Natural killer cell (primary cell): ENCODE measurements at regions of chr11 and their contacts with region 1.

Region 1: GRCh38 chr11:3037040-3037944 is 19.9 kb downstream of the CARS1 start:
- DNase-seq: peak; percentile 53 to 69
- ATAC-seq: peak; percentile 59 to 85 (median 74)
- H3K4me3 ChIP-seq: no peak overlapping the region
- H3K4me3 Mint-ChIP-seq: peak overlapping the region; percentile 14
- H3K27ac ChIP-seq: peak overlapping the region; percentile 0
- H3K27ac Mint-ChIP-seq: peak overlapping the region; percentile 53 to 77
- H3K4me1 ChIP-seq: peaks cover 31% of the 10 kb centered on the region
- H3K4me1 Mint-ChIP-seq: peaks cover 26 to 32% of the 10 kb centered on the region in 2 donors
- H3K27me3 ChIP-seq: no peaks in the 10 kb centered on the region
- H3K27me3 Mint-ChIP-seq: no peaks in the 10 kb centered on the region
- CTCF ChIP-seq: peak; percentile 63

Region 2: GRCh38 chr11:3091791-3092602 is 54.7 kb after region 1 on chr11:
- intact Hi-C with region 1: loop called (anchors 2 kb)
- DNase-seq: peak; percentile 66 to 86
- ATAC-seq: peak; percentile 80 to 89 (median 80)
- H3K4me3 ChIP-seq: no peak overlapping the region
- H3K4me3 Mint-ChIP-seq: no peak overlapping the region
- H3K27ac ChIP-seq: no peak overlapping the region
- H3K27ac Mint-ChIP-seq: peak overlapping the region in 1 of 2 donors; percentile 22
- H3K4me1 ChIP-seq: peaks cover 10% of the 10 kb centered on the region
- H3K4me1 Mint-ChIP-seq: peaks cover 0 to 23% of the 10 kb centered on the region in 2 donors
- H3K27me3 ChIP-seq: no peaks in the 10 kb centered on the region
- H3K27me3 Mint-ChIP-seq: no peaks in the 10 kb centered on the region
- CTCF ChIP-seq: peak; percentile 98

Region 3: DNA sequence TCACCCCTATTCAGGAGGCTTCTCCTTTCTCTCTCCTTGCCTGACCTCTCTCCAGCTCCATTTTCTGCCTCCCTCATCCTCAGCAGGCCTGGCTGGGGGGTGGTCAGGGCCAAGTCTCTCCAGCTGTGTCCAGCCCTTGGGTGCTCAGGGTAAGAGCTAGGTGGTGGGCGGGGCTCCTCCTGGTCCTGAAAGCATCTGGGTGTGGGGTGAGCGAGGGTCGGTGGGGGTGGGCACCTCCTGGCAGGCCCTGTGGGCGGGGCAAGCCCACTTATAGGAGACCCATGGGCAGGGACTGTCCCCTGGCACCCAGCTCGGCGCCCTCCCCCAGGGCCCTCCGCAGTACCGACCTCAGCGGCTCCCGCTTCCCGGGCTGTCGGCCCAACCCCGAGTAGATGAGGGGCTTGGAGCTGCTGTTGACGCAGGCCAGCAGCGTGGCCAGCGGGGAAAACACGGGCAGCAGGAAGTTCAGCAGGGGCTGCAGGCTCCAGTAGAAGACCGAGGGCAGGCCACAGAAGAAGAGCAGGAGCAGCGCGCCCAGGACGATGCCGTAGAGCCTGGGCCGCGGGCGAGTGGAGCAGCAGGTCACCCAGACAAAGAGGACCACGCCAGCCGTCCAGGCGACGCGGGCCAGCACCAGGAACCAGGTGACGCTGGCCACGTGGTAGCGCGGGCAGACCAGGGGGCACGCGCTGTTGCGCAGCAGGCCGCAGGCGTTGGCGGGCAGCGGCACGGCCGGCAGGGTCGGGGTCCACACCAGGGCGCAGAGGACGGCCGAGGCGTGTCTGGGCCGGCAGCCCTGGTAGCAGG is 180.6 kb after region 1 on chr11:
- intact Hi-C with region 1: loop called (anchors 1 kb)
- DNase-seq: no peak
- ATAC-seq: no peak
- H3K4me3 ChIP-seq: no peak overlapping the region
- H3K4me3 Mint-ChIP-seq: no peak overlapping the region
- H3K27ac ChIP-seq: no peak overlapping the region
- H3K27ac Mint-ChIP-seq: no peak overlapping the region
- H3K4me1 ChIP-seq: peaks cover 15% of the 10 kb centered on the region
- H3K4me1 Mint-ChIP-seq: peaks cover 7 to 23% of the 10 kb centered on the region in 2 donors
- H3K27me3 ChIP-seq: peaks cover 2% of the 10 kb centered on the region
- H3K27me3 Mint-ChIP-seq: peaks cover 13 to 27% of the 10 kb centered on the region in 2 donors
- CTCF ChIP-seq: no peak